ENCODE measurements at regions of chr9 and their contacts with region 1.

Region 1: DNA sequence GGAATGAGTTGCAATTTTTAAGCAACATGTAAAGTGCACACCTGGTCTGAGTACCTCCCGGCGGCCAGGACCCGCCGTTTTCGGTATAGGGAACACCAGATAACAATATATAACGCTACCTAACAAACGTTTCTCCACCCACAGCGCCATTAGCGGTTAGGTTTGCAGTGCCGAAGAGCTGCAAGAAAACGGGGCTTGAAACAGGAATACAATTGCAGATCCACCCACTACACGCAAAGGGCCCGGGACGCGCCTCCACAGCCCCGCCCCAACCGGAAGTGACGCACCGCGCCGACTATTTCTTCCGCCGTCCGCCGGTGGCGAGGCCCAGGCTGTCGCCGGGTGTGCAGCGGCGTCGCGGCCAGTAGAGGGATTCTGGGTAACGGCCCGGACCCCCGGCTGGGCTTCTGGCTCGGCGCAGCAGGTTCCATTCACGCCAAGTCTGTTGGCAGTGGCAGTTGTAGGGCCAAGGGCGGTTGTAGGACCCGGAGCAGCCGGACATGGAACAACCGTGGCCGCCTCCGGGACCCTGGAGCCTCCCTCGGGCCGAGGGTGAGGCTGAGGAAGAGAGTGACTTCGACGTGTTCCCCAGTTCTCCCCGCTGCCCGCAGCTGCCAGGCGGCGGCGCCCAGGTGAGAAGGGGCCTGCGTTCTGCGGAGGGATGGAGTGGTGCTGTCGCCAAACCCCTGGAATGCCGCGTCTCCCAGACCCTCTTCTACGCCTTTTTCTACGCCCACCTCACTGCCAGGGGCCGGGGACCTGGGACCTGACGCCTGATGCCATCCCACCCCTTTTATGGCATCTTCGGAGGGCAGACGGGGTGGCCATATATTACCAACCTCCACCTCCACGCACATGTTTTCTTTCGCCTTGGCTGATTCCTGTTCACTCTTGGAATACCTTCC is at the start of gene CDC37L1:
- DNase-seq: peak; percentile 99
- H3K4me3 Mint-ChIP-seq: no peak within 1 kb of the TSS
- H3K27ac Mint-ChIP-seq: no peak within 1 kb of the TSS
- H3K4me1 Mint-ChIP-seq: peaks cover 6% of the 10 kb centered on the region
- H3K27me3 Mint-ChIP-seq: peaks cover 2% of the 10 kb centered on the region
- total RNA-seq, gene CDC37L1: 10.0 and 10.2 TPM in 2 replicates

Region 2: DNA sequence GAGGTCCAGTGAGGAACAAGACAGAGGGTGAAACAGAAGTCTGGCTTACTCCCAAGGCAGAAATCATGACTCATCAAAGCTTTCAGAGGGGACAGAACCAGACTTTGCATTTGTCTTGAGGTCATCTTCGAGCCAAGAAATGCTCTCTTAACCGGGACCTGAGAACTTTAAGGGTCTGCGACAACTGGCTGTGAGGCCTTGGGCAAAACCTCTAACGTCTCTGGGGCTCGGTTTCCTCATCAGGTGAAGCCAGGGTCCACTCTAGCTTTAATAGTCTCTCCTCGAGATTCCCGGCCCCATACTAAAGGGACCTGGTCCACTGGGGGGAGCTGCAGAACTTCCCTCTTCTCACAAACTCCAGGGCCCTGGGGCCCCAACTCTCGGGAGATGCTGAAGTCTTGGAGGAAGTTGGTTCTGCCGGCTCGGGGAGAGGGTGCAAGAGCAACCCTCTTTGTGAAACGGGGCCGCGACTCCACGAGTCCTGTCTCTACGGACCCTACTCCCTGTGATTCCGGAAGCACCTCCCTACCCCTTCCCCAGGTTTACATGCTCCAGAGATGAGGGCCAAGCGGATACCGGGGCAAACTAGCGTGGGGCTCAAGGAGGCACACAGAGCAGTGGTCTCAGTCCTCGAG is 382.3 kb before region 1 on chr9:
- intact Hi-C with region 1: loop called (anchors 10 kb)
- DNase-seq: peak; percentile 22
- H3K4me3 Mint-ChIP-seq: peak overlapping the region; percentile 97
- H3K27ac Mint-ChIP-seq: peak overlapping the region; percentile 87
- H3K4me1 Mint-ChIP-seq: peaks cover 49% of the 10 kb centered on the region
- H3K27me3 Mint-ChIP-seq: peaks cover 56% of the 10 kb centered on the region

Region 3: DNA sequence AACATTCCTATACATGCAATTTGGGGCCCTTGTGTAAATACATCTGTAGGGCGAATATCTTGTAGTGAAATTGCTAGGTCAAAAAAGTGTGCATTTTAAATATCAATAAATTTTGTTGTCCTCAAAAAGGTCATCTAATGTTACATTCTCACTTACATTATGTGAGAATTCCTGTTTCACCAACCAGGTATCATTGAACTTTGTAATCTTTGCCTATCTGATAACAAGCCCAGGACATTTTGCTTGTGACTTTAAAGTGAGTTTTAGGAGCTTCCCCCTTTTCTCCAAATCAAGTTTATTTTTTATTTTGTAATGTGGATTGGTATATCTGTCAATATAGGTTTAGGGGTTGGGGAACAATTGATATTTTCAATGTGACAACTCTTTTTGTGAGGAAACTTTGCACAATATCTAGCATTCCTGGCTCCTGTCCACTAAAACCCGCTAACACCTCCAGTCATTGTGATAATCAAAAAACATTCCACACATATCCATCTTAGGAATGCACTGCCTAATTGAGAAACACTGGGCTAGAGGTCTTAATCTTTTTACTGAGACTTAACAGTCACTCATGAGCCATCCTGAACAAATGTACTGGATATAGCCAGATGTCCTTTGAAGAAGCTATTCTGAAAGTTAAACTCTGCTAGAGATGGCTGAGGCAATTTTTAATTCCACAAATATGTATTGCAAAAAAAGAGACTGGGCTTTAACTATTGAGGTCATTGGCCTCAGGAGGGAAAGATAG is 261.8 kb before region 1 on chr9:
- intact Hi-C with region 1: no loop called
- DNase-seq: no peak
- H3K4me3 Mint-ChIP-seq: no peak overlapping the region
- H3K27ac Mint-ChIP-seq: no peak overlapping the region
- H3K4me1 Mint-ChIP-seq: peaks cover 11% of the 10 kb centered on the region
- H3K27me3 Mint-ChIP-seq: peaks cover 6% of the 10 kb centered on the region

Region 4: DNA sequence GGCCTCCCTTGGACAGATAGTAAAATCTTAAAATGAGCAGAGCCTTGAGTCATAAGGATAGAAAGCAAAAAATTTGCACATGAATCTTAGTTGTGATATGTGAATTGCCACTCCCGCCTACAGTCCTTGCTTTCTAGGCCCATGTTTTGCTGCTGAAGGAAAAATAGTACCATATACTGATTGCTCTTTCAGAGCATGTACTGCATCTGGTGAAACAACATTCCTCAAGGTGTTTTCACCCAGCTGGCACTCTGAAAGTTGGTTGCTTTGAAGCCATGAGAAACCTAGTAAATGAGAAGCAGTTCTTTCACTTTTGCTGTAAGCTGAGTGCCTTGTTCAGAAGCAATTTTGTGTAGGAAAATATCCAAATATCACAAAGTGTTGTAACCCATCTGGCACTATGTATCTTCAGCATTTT is 10.2 kb after region 1 on chr9:
- intact Hi-C with region 1: loop called (anchors 1 kb)
- DNase-seq: no peak
- H3K4me3 Mint-ChIP-seq: no peak overlapping the region
- H3K27ac Mint-ChIP-seq: peak overlapping the region; percentile 57
- H3K4me1 Mint-ChIP-seq: peaks cover 25% of the 10 kb centered on the region
- H3K27me3 Mint-ChIP-seq: no peaks in the 10 kb centered on the region

Region 5: GRCh38 chr9:4713849-4714248 is 34.3 kb after region 1 on chr9:
- intact Hi-C with region 1: no loop called
- DNase-seq: no peak
- H3K4me3 Mint-ChIP-seq: no peak overlapping the region
- H3K27ac Mint-ChIP-seq: peak overlapping the region; percentile 69
- H3K4me1 Mint-ChIP-seq: peaks cover 6% of the 10 kb centered on the region
- H3K27me3 Mint-ChIP-seq: no peaks in the 10 kb centered on the region

Region 6: GRCh38 chr9:4792572-4793458 is 113.3 kb after region 1 on chr9 and contains the start of gene RCL1:
- intact Hi-C with region 1: loop called (anchors 2 kb)
- DNase-seq: peak; percentile 97
- H3K4me3 Mint-ChIP-seq: peak within 1 kb of the TSS; percentile 93
- H3K27ac Mint-ChIP-seq: peak within 1 kb of the TSS; percentile 90
- H3K4me1 Mint-ChIP-seq: peaks cover 40% of the 10 kb centered on the region
- H3K27me3 Mint-ChIP-seq: peaks cover 2% of the 10 kb centered on the region
- total RNA-seq, gene RCL1: 34.5 and 36.3 TPM in 2 replicates

Measured in activated T-helper 2 cell treated with anti-CD3 and anti-CD28 coated beads, Interferon-gamma antibody, Interleukin-2, Interleukin-4, amounts not matched to agents 10 μg/mL and 5 μg/mL and 100 μg/mL, durations not matched to agents 14 hours and 24 hours and 36 hours (primary cell).